ENCODE measurements at regions of chr4 and their contacts with region 1.

Region 1: DNA sequence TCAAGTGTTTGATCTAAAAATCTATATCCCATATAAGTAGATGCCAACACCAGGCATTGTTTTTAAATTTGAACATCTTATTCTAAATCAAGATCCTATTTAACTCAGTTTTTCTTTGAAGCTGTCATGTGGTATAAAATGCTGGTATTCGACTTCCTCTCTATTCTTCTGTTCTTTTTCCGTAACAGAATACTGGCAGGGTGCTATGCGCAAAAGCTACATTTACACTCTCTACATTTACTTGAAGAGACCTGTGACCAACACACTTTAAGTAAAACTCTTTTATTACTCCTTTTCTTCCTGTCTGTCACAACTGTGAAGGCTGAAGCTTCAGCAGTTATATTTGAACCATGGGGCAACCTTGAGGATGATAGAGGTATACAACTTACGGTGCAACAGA is 612.8 kb downstream of the C4orf33 start:
- DNase-seq: no peak
- ATAC-seq: no peak
- H3K4me3 ChIP-seq: no peak overlapping the region
- H3K4me3 Mint-ChIP-seq: no peak overlapping the region
- H3K27ac ChIP-seq: no peak overlapping the region
- H3K27ac Mint-ChIP-seq: no peak overlapping the region
- H3K4me1 ChIP-seq: no peaks in the 10 kb centered on the region
- H3K4me1 Mint-ChIP-seq: no peaks in the 10 kb centered on the region
- H3K27me3 ChIP-seq: no peaks in the 10 kb centered on the region
- H3K27me3 Mint-ChIP-seq: no peaks in the 10 kb centered on the region
- CTCF ChIP-seq: no peak

Region 2: GRCh38 chr4:130249002-130249401 is 540.2 kb after region 1 on chr4:
- CTCF ChIA-PET with region 1: no interaction called
- POLR2A ChIA-PET with region 1: no interaction called
- intact Hi-C with region 1: loop called (anchors 10 kb)
- DNase-seq: no peak
- ATAC-seq: no peak
- H3K4me3 ChIP-seq: no peak overlapping the region
- H3K4me3 Mint-ChIP-seq: no peak overlapping the region
- H3K27ac ChIP-seq: no peak overlapping the region
- H3K27ac Mint-ChIP-seq: no peak overlapping the region
- H3K4me1 ChIP-seq: no peaks in the 10 kb centered on the region
- H3K4me1 Mint-ChIP-seq: no peaks in the 10 kb centered on the region
- H3K27me3 ChIP-seq: no peaks in the 10 kb centered on the region
- H3K27me3 Mint-ChIP-seq: no peaks in the 10 kb centered on the region
- CTCF ChIP-seq: no peak

Measured in B cell (primary cell).